ENCODE measurements at regions of chr15 and their contacts with region 1.

Region 1: GRCh38 chr15:64780600-64781156 is 5.3 kb upstream of the RBPMS2 start:
- DNase-seq: no peak
- ATAC-seq: no peak
- H3K4me3 ChIP-seq: no peak overlapping the region
- H3K27ac ChIP-seq: no peak overlapping the region
- H3K4me1 ChIP-seq: no peaks in the 10 kb centered on the region
- H3K27me3 ChIP-seq: peaks cover 3 to 9% of the 10 kb centered on the region in 2 experiments; a peak in 3 of 4 replicates
- CTCF ChIP-seq: no peak
- EP300 ChIP-seq: no peak
- POLR2A ChIP-seq: no peak
- RAD21 ChIP-seq: no peak

Region 2: DNA sequence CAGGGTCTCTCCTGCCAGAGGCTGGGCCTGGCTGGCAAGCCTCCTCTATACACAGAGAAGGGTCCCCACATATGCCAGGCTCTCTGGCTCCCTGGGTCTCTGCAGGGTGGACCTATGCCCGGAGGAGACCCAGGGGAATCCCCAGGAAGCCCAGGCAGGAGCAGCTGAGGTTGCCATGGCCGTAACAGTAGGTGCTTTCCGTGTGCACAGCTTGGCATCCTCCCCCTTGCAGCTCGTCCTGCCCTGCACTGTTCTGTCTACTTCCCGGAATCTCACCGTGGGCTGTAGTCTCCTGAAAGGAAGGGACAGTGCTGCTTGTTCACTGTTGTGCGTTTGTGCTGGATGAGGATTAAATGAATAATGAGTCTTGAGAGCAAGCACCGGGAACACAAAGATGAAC is 782.2 kb before region 1 on chr15:
- CTCF ChIA-PET with region 1: no interaction called
- POLR2A ChIA-PET with region 1: no interaction called
- RAD21 ChIA-PET with region 1: no interaction called
- SMC1A ChIA-PET with region 1: no interaction called
- in situ Hi-C with region 1: no loop called
- intact Hi-C with region 1: no loop called
- DNase-seq: no peak
- ATAC-seq: peak; percentile 88
- H3K4me3 ChIP-seq: no peak overlapping the region
- H3K27ac ChIP-seq: peak overlapping the region; percentile 40; the same call in 1 of the 2 replicates
- H3K4me1 ChIP-seq: peaks cover 30% of the 10 kb centered on the region
- H3K27me3 ChIP-seq: no peaks in the 10 kb centered on the region
- CTCF ChIP-seq: no peak
- EP300 ChIP-seq: no peak
- POLR2A ChIP-seq: no peak
- RAD21 ChIP-seq: no peak

Region 3: DNA sequence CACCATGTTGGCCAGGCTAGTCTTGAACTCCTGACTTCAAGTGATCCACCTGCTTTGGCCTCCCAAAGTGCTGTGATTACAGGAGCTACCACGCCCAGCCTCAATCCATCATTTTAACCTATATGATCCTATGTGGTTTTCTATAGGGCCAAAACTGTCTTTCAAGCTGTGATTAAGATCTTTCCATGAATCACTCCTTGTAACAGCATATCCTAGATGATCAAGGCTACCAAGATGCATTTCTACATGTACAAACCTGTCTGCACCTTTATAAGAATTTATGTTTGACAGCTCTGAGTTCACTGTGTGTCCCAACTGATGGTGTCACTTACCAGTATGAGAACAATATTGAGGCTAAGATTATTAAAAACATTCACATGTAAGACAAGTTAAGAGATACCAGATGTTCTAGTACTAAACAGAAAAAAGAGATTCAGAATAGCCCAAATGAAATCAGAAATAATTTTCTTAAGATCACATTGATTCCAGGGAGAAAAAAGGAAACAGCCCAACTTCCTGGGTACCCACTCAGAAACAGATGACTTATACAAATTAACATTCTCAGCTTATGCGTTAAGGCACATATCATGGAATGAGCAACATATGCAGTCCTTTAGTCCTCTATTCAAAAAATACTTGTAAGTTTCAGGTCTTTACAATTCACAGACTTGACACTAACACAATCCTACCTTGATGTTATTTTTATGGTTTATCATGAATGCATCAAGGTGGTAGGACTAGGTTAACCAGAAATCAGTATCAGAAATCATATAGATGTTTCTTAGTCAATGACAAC is 593.1 kb before region 1 on chr15:
- CTCF ChIA-PET with region 1: no interaction called
- POLR2A ChIA-PET with region 1: no interaction called
- RAD21 ChIA-PET with region 1: no interaction called
- SMC1A ChIA-PET with region 1: no interaction called
- in situ Hi-C with region 1: no loop called
- intact Hi-C with region 1: no loop called
- DNase-seq: no peak
- ATAC-seq: no peak
- H3K4me3 ChIP-seq: no peak overlapping the region
- H3K27ac ChIP-seq: no peak overlapping the region
- H3K4me1 ChIP-seq: no peaks in the 10 kb centered on the region
- H3K27me3 ChIP-seq: no peaks in the 10 kb centered on the region
- CTCF ChIP-seq: no peak
- EP300 ChIP-seq: no peak
- POLR2A ChIP-seq: no peak
- RAD21 ChIP-seq: no peak

Region 4: DNA sequence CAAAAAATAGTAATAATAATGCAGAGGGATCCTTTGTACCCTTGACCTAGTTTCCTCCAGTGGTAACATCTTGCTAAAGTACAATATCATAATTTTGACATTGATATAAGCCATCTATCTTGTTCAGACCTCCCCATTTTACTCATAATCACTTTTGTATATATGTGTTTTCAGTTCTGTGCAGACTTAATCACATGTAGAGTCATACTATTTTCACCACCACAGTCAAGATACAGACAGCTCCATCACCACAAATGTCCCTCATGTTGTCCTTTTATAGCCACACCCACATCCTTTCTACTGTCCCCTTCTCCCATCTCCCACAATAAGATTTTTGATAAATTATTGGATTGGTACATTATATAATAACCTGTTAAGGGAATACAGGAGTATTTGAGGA is 294.9 kb before region 1 on chr15:
- CTCF ChIA-PET with region 1: no interaction called
- POLR2A ChIA-PET with region 1: no interaction called
- RAD21 ChIA-PET with region 1: no interaction called
- SMC1A ChIA-PET with region 1: no interaction called
- in situ Hi-C with region 1: no loop called
- intact Hi-C with region 1: no loop called
- DNase-seq: no peak
- ATAC-seq: no peak
- H3K4me3 ChIP-seq: no peak overlapping the region
- H3K27ac ChIP-seq: no peak overlapping the region
- H3K4me1 ChIP-seq: no peaks in the 10 kb centered on the region
- H3K27me3 ChIP-seq: no peaks in the 10 kb centered on the region
- CTCF ChIP-seq: no peak
- EP300 ChIP-seq: no peak
- POLR2A ChIP-seq: no peak
- RAD21 ChIP-seq: no peak

Region 5: GRCh38 chr15:64749999-64750657 is 30.6 kb before region 1 on chr15:
- CTCF ChIA-PET with region 1: interaction called, 3 read pairs
- POLR2A ChIA-PET with region 1: interaction called, 10 read pairs
- RAD21 ChIA-PET with region 1: interaction called, 3 read pairs
- SMC1A ChIA-PET with region 1: interaction called, 6 read pairs
- in situ Hi-C with region 1: no loop called
- intact Hi-C with region 1: no loop called
- DNase-seq: no peak
- ATAC-seq: no peak
- H3K4me3 ChIP-seq: no peak overlapping the region
- H3K27ac ChIP-seq: no peak overlapping the region
- H3K4me1 ChIP-seq: peaks cover 17% of the 10 kb centered on the region
- H3K27me3 ChIP-seq: no peaks in the 10 kb centered on the region; a peak in 1 of 4 replicates
- CTCF ChIP-seq: no peak
- EP300 ChIP-seq: no peak
- POLR2A ChIP-seq: no peak
- RAD21 ChIP-seq: no peak

Region 6: GRCh38 chr15:65054333-65055200 is 273.9 kb after region 1 on chr15:
- CTCF ChIA-PET with region 1: no interaction called
- POLR2A ChIA-PET with region 1: no interaction called
- RAD21 ChIA-PET with region 1: no interaction called
- SMC1A ChIA-PET with region 1: no interaction called
- in situ Hi-C with region 1: no loop called
- intact Hi-C with region 1: no loop called
- DNase-seq: no peak
- ATAC-seq: peak; percentile 82
- H3K4me3 ChIP-seq: no peak overlapping the region
- H3K27ac ChIP-seq: no peak overlapping the region
- H3K4me1 ChIP-seq: peaks cover 6% of the 10 kb centered on the region
- H3K27me3 ChIP-seq: no peaks in the 10 kb centered on the region
- CTCF ChIP-seq: peak; percentile 89 to 93 (median 89)
- EP300 ChIP-seq: no peak
- POLR2A ChIP-seq: no peak
- RAD21 ChIP-seq: peak; percentile 84

Measured in GM12878 (cell line).